Activated CD4-positive, alpha-beta memory T cell treated with anti-CD3 and anti-CD28 coated beads for 36 hours (primary cell): ENCODE measurements at regions of chr1 and their contacts with region 1.

Region 1: DNA sequence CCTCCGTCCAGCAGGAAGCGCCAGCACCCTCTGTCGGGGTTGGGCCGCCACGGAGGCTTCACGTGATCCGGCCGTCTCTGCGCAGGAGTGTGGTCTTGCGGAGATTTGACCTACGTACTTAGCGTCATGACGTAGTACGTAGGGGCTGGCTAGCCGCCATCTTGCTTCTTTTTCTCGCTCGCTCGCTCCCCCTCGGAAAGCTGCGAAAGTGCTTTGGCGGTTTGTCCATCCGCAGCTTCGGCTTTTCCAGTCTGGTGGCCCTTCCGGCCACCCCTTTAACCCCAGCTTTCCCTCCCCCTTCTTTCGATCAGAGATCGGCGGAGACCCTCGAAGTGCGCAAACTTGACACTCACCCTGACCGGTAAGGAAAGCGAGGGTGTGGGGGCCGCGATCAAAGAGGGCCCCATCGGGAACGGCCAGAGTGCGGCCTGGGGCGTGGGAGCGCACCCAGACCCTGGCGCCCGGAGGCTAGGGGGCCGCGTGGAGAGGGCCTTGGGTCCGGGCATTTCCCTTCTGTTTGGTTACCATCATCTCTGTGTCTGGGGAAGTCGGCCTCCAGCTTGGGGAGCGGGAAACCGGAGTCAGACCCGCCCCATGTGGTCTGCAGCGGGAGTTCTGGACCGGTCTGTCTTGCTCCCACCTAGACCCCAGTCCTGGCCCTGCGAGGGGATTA is at the start of gene PRRC2C:
- DNase-seq: peak; percentile 96
- H3K4me3 Mint-ChIP-seq: peak within 1 kb of the TSS; percentile 83
- H3K27ac Mint-ChIP-seq: peak within 1 kb of the TSS; percentile 93
- H3K4me1 Mint-ChIP-seq: peaks cover 43% of the 10 kb centered on the region
- H3K27me3 Mint-ChIP-seq: no peaks in the 10 kb centered on the region
- total RNA-seq, gene PRRC2C: 191 to 205 TPM

Region 2: DNA sequence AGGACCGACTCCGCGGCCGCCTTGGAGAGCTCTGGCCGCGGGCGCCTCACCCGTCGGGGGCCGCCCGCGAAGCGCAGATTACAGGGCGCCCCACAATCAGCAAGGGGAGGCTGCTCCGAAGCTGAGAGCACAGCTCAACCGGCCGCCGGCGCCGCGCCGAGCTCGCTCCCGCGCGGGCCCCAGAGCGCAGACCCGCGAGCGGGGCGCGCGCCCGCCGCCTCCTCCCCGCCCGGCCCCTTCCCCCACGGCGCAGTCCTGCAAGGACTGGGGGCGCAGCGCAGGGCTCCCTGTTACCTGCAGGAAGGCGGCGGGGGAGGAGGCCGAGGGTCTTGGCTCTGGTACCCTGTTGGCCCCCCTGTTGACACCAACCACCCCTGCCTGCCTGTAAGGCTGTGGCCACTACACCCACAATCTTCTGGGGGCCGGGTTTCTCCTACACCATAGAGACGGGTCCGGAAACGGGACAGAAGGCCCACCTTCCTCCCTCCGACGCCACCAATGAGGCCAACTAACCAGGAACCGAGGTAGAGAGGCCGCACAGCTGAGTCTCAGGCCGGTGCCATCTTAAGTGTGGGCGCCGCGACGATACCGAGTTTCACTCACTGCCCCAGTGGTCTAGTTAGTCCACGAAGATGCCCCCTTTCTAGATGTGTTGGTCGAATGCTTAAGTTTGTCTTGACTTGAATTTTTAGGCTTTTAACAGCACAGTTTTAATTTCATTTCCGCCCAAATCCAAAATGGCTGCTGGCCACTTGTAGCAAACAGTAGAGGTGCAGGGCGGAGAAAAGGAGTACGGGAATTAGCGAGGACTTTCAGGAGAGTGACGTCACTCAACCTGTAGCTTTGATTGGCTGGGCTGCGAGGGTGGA is 1591.8 kb before region 1 on chr1 and contains the start of gene SCYL3:
- CTCF ChIA-PET with region 1: no interaction called
- POLR2A ChIA-PET with region 1: no interaction called
- intact Hi-C with region 1: loop called (anchors 2 kb)
- DNase-seq: peak; percentile 92
- H3K4me3 Mint-ChIP-seq: peak within 1 kb of the TSS; percentile 82
- H3K27ac Mint-ChIP-seq: peak within 1 kb of the TSS; percentile 98
- H3K4me1 Mint-ChIP-seq: peaks cover 38% of the 10 kb centered on the region
- H3K27me3 Mint-ChIP-seq: no peaks in the 10 kb centered on the region
- total RNA-seq, gene SCYL3: 11.1 to 12.4 TPM

Region 3: DNA sequence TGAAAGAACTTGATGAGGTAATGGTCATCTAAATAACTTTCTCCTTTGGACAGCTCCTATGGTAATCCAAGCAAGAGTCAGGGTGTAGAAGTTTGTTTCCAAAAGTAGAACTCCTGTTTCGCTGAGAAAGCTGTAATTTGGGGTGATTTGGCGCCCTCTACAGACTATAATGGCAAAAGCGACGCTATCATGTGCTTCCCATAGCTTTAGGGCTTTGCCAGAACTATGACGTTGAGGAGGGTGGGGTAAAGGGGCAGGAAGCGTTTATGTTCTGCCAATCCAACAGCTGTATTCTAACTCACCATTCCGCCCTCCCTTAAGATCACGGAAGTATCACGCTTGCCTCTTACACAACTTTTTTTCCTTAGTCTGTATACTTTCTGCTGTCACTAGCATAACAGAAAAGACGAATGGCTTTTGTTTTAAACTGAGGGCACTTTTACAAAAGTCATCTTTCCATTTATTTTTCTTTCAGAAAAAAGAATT is 171.6 kb before region 1 on chr1 and contains the start of gene FMO4:
- CTCF ChIA-PET with region 1: interaction called, 11 read pairs
- POLR2A ChIA-PET with region 1: no interaction called
- intact Hi-C with region 1: loop called (anchors 10 kb)
- DNase-seq: peak; percentile 88
- H3K4me3 Mint-ChIP-seq: peak within 1 kb of the TSS; percentile 70
- H3K27ac Mint-ChIP-seq: peak within 1 kb of the TSS; percentile 72
- H3K4me1 Mint-ChIP-seq: peaks cover 17% of the 10 kb centered on the region
- H3K27me3 Mint-ChIP-seq: no peaks in the 10 kb centered on the region
- total RNA-seq, gene FMO4: 1.4 to 1.9 TPM

Region 4: DNA sequence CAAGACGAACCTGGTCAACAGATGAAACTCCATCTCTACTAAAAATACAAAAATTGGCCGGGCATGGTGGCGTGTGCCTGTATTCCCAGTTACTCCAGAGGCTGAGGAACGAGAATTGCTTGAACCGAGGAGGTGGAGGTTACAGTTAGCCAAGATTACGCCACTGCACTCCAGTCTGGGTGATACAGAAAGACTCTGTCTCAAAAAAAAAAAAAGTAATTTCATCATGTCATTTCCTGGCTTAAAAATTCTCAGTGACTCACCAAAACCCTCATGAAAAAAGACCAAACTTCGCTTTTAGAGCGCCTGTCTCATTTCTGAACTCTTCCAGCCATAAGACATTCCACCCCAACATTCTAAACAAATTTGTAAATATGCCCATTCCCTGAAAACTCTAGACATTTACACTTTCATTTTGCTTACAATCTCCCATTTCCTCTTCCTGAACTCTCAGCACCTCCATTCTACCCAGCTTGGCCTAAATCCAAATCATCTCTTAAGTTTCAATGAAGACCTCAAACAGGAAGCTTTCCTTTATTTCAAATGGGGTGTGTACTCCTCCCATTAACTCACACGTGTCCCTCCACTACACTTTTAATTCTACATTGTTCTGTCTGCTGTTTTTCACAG is 50.7 kb before region 1 on chr1:
- CTCF ChIA-PET with region 1: no interaction called
- POLR2A ChIA-PET with region 1: no interaction called
- intact Hi-C with region 1: loop called (anchors 2 kb)
- DNase-seq: peak; percentile 19
- H3K4me3 Mint-ChIP-seq: peak overlapping the region; percentile 24
- H3K27ac Mint-ChIP-seq: peak overlapping the region; percentile 72
- H3K4me1 Mint-ChIP-seq: peaks cover 14% of the 10 kb centered on the region
- H3K27me3 Mint-ChIP-seq: no peaks in the 10 kb centered on the region

Region 5: GRCh38 chr1:171515299-171515698 is 29.8 kb after region 1 on chr1:
- CTCF ChIA-PET with region 1: interaction called, 43 read pairs
- POLR2A ChIA-PET with region 1: interaction called, 4 read pairs
- intact Hi-C with region 1: no loop called
- DNase-seq: no peak
- H3K4me3 Mint-ChIP-seq: no peak overlapping the region
- H3K27ac Mint-ChIP-seq: peak overlapping the region; percentile 8
- H3K4me1 Mint-ChIP-seq: peaks cover 55% of the 10 kb centered on the region
- H3K27me3 Mint-ChIP-seq: no peaks in the 10 kb centered on the region

Region 6: DNA sequence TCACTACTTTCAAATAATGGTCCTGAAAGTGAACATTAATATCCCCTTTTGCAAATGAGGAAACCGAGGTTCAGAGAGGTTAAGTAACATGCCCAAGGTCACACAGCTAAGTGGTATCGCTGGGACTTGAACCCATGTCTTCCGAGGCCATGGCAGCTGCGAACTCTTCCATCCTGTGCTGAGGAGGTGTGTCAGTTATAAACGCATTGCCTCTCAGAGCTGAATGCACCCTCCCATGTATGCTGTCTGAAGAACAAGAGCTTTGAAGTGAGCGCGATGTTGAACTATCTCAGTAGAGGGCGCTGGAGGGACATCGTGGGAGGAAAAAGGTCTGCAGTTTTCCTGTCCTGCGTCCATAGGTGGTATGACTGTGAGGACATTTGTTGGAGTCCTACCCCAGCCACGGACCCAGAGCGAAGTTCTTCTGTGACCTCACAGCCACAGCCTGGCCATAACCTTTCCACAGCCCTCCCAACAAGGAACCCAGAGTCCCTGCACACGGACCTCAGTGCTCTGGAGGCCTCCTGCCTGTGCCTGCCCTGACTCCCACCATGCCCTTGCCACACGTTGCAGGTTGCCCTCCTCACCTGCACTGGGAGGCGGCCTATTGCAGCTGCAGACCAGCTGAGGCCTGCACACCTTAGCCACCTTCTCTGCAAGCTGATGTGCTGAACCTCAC is 159.4 kb after region 1 on chr1:
- CTCF ChIA-PET with region 1: interaction called, 5 read pairs
- POLR2A ChIA-PET with region 1: no interaction called
- intact Hi-C with region 1: loop called (anchors 1 kb)
- DNase-seq: peak; percentile 82
- H3K4me3 Mint-ChIP-seq: no peak overlapping the region
- H3K27ac Mint-ChIP-seq: no peak overlapping the region
- H3K4me1 Mint-ChIP-seq: peaks cover 4% of the 10 kb centered on the region
- H3K27me3 Mint-ChIP-seq: no peaks in the 10 kb centered on the region

Region 7: DNA sequence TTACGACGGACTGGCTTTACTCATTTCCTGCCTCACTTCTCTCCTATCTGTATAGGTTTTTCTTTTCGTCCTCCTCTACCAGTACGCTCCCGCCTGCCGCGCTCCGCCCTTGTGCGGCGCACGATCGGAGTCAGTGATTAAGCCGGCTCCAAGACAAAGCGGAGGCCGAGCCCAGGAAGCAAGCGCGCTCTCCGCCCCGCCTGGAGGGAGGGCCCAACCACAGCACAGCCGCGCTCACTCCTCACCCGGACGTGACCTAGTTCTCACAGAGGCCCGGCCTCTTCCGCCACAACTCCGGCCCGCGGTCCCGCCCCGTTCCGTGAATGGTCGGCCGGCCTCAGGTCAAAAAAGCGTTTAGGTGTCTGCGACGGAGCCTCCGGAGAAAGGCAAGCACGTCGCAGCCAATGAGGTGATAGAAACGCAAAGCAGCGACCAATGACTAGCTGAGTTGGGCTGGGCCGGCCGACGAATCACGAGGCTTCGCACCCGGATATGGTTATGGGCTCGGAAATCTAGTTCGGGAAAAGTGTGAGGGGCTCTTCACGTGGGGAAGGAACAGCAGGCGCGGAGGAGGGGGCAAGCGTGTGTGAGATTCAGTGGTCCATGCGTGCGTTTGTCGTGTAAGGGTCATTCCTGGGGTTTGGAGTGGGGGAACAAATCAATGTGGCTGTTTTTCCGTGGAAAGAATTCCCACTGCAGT is 295.8 kb after region 1 on chr1 and contains the start of gene METTL13:
- CTCF ChIA-PET with region 1: interaction called, 3 read pairs
- POLR2A ChIA-PET with region 1: no interaction called
- intact Hi-C with region 1: loop called (anchors 1 kb)
- DNase-seq: peak; percentile 99
- H3K4me3 Mint-ChIP-seq: peak within 1 kb of the TSS; percentile 96
- H3K27ac Mint-ChIP-seq: peak within 1 kb of the TSS; percentile 94
- H3K4me1 Mint-ChIP-seq: peaks cover 59% of the 10 kb centered on the region
- H3K27me3 Mint-ChIP-seq: no peaks in the 10 kb centered on the region
- total RNA-seq, gene METTL13: 45.6 to 49.8 TPM

Region 8: DNA sequence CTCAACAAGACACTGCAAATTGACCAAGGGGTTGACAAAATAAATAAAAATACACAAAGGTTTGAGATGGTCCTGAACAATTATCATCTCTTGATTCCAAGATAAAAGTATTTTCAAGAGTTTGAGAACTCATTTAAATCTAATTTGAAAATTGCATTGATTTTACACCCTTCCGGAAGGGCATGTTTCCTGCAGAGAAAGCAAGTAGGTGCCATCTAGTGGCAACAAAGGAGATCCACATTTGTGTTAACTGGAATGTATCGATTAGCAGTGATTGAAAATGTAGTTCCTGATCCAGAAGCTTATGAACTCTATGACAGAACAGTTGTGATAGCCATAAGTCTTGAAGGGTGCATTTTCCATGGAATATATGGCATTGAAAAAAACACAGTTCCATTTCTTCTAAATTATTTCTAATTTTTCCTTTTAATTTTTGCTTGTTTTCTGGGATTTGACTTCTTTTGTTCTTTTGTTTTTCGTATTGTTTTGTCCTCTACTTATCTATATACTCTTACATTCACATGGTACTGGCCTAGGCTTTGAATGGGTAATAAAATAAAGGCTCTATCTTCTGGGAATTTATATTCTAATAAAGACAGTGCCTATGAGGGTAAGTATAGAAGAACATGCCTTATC is 499.5 kb after region 1 on chr1:
- CTCF ChIA-PET with region 1: no interaction called
- POLR2A ChIA-PET with region 1: no interaction called
- intact Hi-C with region 1: no loop called
- DNase-seq: no peak
- H3K4me3 Mint-ChIP-seq: no peak overlapping the region
- H3K27ac Mint-ChIP-seq: no peak overlapping the region
- H3K4me1 Mint-ChIP-seq: no peaks in the 10 kb centered on the region
- H3K27me3 Mint-ChIP-seq: peaks cover 1% of the 10 kb centered on the region